Activated naive CD8-positive, alpha-beta T cell treated with anti-CD3 and anti-CD28 coated beads, Interleukin-2, amount 10 ng/mL, durations not matched to agents 7 days and 5 days (primary cell): ENCODE measurements at regions of chr12 and their contacts with region 1.

Region 1: DNA sequence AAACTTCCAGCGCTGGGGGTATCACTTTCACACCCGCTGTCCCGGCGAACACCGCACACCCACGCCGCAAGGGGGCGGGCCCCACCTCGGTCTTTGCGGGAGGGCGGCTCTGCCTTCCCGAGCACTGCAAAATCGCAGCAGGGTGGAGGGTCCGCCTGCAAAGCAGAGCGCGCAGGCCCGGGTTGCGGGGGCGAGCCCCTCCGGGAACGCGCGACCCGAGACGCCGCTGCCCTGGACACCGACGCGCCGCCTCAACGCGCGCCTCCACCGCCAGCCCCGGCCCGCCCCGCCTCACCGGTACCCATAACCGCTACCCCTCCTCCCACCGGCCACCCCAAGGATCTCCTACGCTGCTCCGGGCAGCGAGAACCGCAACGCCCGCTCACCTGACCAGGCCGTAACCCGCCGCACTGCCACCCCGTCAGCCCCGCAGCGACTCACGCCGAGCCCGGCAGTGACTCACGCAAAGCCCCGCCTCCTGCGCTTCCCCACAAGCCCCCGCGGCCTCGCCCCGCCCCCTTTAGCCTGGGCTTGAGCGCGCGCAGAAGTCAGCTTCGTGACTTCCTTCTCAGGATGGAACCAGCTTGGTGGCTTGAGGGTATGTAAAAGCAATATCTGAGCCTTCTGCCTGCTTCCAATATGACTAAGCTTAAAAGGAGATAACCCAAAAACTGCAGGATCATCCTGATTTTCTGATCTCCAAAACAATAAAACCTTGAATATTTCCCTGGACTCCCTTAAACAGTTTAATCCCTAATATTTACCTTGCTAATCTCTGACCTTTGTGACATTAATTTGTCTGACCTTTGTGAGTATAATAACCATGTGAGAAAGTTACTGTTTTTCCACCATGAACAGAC is at the start of gene RPAP3:
- DNase-seq: peak; percentile 99
- ATAC-seq: peak; percentile 94
- H3K4me3 Mint-ChIP-seq: peak within 1 kb of the TSS; percentile 96
- H3K27ac Mint-ChIP-seq: peak within 1 kb of the TSS; percentile 97
- H3K4me1 Mint-ChIP-seq: peaks cover 44% of the 10 kb centered on the region
- H3K27me3 Mint-ChIP-seq: no peaks in the 10 kb centered on the region
- total RNA-seq, gene RPAP3: 36.0 to 41.1 TPM

Region 2: DNA sequence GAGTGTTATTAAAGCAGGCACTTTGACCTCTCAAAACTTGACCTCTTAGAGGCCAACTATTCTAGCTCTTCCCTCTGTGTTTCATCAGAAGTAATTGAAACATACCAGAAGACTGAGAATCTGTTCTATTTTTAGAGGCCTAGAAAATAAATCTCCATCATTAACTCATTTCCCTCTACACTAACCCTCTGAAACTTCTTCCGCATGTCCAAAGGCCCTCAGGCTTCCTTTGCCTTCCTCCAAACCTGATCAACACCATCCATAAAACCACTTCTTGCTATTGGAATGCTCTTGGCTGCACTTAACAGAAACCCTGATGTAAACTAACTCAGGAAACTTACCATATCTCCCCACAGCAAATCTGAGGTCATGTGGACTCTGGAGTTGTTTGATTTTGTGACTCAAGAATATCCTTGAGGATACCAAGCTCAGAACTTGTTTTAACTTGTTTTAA is 196.4 kb before region 1 on chr12:
- POLR2A ChIA-PET with region 1: no interaction called
- DNase-seq: no peak
- ATAC-seq: no peak
- H3K4me3 Mint-ChIP-seq: no peak overlapping the region
- H3K27ac Mint-ChIP-seq: no peak overlapping the region
- H3K4me1 Mint-ChIP-seq: no peaks in the 10 kb centered on the region
- H3K27me3 Mint-ChIP-seq: no peaks in the 10 kb centered on the region

Region 3: GRCh38 chr12:47602325-47602724 is 103.5 kb before region 1 on chr12:
- POLR2A ChIA-PET with region 1: no interaction called
- DNase-seq: no peak
- ATAC-seq: no peak
- H3K4me3 Mint-ChIP-seq: no peak overlapping the region
- H3K27ac Mint-ChIP-seq: no peak overlapping the region
- H3K4me1 Mint-ChIP-seq: peaks cover 2% of the 10 kb centered on the region
- H3K27me3 Mint-ChIP-seq: no peaks in the 10 kb centered on the region

Region 4: DNA sequence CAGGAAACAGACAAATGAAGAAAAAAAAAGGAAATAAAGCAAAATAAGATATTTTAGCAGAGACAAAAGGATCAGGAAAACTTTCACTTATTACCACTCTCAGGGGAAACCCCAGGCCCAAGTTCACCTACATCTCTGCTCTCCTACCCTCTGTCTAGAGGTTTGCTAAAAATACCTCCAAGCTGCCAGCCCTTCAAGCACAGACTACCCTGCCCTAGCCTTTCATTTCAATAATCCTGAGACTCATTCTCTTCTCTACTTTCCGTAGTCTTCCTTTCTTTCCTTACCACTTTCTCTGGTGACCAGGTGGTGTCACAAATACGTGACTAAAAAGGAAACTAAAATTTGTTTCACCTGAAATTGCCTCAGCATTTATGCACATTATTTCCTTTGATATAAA is 33.7 kb before region 1 on chr12:
- POLR2A ChIA-PET with region 1: no interaction called
- DNase-seq: no peak
- ATAC-seq: no peak
- H3K4me3 Mint-ChIP-seq: no peak overlapping the region
- H3K27ac Mint-ChIP-seq: no peak overlapping the region
- H3K4me1 Mint-ChIP-seq: peaks cover 11% of the 10 kb centered on the region
- H3K27me3 Mint-ChIP-seq: no peaks in the 10 kb centered on the region

Region 5: DNA sequence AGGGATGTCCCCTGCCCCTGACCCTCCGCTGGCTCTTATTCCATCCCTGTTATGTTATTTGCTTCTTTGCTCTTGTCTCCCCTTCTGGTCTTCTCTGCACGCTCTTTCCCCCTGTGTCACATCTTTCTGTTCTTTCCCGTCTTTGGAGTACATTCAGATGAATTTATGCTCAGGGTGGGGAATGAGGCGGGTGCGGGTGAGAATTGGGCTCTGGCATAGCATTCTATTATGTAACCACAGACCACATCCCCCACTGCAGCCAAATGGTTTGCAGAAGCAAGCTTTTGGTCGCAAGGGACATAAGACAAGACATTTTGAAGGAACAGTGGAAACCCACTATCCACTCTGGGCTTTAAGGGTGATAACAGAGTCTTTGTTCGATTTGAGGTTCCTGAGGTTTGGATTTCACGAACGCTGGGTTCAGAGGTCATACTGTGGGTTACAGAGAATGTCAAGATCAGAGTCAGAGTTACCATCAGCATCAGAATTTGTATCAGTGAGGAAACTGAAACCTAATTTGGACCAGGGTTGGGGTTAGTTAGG is 15.7 kb after region 1 on chr12:
- POLR2A ChIA-PET with region 1: interaction called, 10 read pairs
- DNase-seq: no peak
- ATAC-seq: peak; percentile 55
- H3K4me3 Mint-ChIP-seq: peak overlapping the region; percentile 69
- H3K27ac Mint-ChIP-seq: peak overlapping the region; percentile 90
- H3K4me1 Mint-ChIP-seq: peaks cover 64% of the 10 kb centered on the region
- H3K27me3 Mint-ChIP-seq: no peaks in the 10 kb centered on the region